ENCODE measurements at regions of chr20 and their contacts with region 1.

Region 1: DNA sequence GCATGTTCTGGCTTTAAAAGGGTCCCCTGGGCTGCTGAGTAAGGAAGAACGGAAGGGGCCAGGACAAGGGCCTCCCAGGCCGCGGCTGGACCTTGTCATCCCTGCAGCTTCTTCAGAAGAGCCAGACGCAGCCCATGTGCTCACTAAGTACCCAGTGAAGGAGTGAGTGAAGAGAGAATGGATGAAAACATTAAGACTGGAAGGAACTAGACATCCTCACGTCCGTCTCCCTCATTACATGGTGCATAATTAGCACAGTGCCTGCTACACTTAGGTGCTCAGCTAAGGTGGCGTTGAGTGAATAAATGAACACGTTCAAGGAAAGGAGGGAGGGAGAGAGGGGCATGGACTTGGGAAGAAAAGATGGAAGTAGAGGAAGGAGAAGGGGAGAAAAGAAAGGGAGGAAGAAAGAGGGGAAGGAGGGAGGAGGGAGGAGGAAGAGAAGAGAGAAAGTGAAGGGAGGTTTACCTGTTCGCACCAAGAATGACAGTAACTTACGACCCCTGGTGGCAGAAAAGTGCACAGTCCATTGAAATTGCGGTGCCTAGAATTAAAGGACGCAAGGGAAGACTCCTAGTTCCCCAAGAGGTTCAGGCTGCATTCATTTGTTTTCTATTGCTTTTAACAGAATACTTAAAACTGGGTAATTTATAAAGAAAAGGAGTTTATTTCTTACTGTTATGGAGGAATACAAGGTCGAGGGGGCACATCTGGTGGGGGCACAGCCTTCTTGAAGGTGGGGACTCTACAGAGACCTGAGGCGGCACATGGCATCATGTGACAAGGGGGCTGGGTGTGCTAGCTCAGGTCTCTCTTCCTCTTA is 8.0 kb downstream of the TP53RK start:
- DNase-seq: peak; percentile 60
- H3K4me3 ChIP-seq: no peak overlapping the region
- H3K27ac ChIP-seq: no peak overlapping the region
- H3K4me1 ChIP-seq: peaks cover 4% of the 10 kb centered on the region
- H3K27me3 ChIP-seq: no peaks in the 10 kb centered on the region
- CTCF ChIP-seq: peak; percentile 86

Region 2: DNA sequence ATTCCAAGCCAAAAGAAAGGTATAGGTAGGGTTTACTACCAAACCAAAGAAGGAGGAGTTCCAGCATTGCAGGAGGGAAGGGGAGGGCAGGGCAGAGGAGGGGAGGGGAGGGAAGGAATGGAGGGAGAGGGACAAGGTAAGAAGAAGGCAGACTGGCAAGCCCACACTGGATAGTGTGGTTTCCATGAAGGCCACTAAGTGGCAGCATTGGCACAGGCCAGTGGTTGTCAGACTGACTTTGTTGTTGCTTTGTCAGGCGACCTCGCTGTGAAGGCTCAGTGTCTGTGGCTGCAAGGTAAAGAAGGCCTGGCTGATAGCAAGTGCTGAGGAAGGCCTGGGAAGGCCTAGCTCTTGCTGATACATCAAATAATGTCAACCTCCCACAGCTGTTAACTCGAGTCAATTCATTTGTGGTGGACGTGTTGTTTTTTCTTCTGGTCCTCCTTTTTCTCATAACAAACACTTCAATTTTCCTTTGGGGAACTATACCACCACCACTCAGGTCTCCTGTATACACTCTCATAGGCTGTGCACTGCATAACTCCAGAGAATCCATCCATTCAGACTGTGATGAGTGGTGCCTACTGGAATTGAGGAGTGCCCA is 160.2 kb before region 1 on chr20:
- CTCF ChIA-PET with region 1: no interaction called
- POLR2A ChIA-PET with region 1: no interaction called
- intact Hi-C with region 1: loop called (anchors 1 kb)
- DNase-seq: peak; percentile 50
- H3K4me3 ChIP-seq: no peak overlapping the region
- H3K27ac ChIP-seq: no peak overlapping the region
- H3K4me1 ChIP-seq: no peaks in the 10 kb centered on the region
- H3K27me3 ChIP-seq: no peaks in the 10 kb centered on the region
- CTCF ChIP-seq: peak; percentile 62